Activated CD4-positive, alpha-beta memory T cell treated with anti-CD3 and anti-CD28 coated beads, Interleukin-2, amount 10 ng/mL, durations not matched to agents 7 days and 5 days (primary cell): ENCODE measurements at regions of chr3 and their contacts with region 1.

Region 1: GRCh38 chr3:62610116-62610515 is 236.8 kb upstream of the FEZF2 start:
- DNase-seq: no peak
- H3K4me3 Mint-ChIP-seq: no peak overlapping the region
- H3K27ac Mint-ChIP-seq: no peak overlapping the region
- H3K4me1 Mint-ChIP-seq: no peaks in the 10 kb centered on the region
- H3K27me3 Mint-ChIP-seq: no peaks in the 10 kb centered on the region

Region 2: GRCh38 chr3:60669636-60670035 is 1940.5 kb before region 1 on chr3:
- CTCF ChIA-PET with region 1: interaction called, 12 read pairs
- POLR2A ChIA-PET with region 1: no interaction called
- DNase-seq: no peak
- H3K4me3 Mint-ChIP-seq: no peak overlapping the region
- H3K27ac Mint-ChIP-seq: no peak overlapping the region
- H3K4me1 Mint-ChIP-seq: no peaks in the 10 kb centered on the region
- H3K27me3 Mint-ChIP-seq: no peaks in the 10 kb centered on the region